ENCODE measurements at regions of chr4 and their contacts with region 1.

Region 1: GRCh38 chr4:83498187-83498586 is 13.3 kb upstream of the ABRAXAS1 start:
- DNase-seq: no peak
- H3K4me3 Mint-ChIP-seq: no peak overlapping the region
- H3K27ac Mint-ChIP-seq: no peak overlapping the region
- H3K4me1 Mint-ChIP-seq: no peaks in the 10 kb centered on the region
- H3K27me3 Mint-ChIP-seq: peaks cover 3% of the 10 kb centered on the region

Region 2: GRCh38 chr4:83484500-83485461 is 13.4 kb before region 1 on chr4 and contains the start of gene ABRAXAS1:
- CTCF ChIA-PET with region 1: interaction called, 7 read pairs
- POLR2A ChIA-PET with region 1: interaction called, 14 read pairs
- DNase-seq: peak; percentile 95
- H3K4me3 Mint-ChIP-seq: peak within 1 kb of the TSS; percentile 95
- H3K27ac Mint-ChIP-seq: peak within 1 kb of the TSS; percentile 89
- H3K4me1 Mint-ChIP-seq: peaks cover 15% of the 10 kb centered on the region
- H3K27me3 Mint-ChIP-seq: no peaks in the 10 kb centered on the region
- total RNA-seq, gene ABRAXAS1: 11.2 to 13.7 TPM

Region 3: DNA sequence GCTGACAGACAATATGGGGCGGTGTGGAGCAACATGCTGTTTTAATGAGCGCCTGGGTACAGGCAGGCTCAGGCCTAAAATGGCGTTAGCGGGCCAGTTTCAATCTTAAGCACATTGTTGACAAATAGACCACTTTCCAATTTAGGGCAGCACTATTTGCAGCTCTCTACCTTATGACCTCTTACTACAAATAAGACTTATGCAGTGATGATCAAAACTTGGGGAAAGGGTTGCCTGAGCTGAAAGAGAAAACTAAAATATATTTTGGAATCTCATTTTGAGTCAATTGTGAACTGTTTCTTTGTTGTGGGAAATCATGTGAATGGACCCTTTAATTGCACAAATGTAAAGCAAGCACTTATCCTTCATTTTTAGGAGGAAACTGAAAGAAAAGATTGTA is 12.3 kb after region 1 on chr4:
- CTCF ChIA-PET with region 1: interaction called, 16 read pairs
- POLR2A ChIA-PET with region 1: interaction called, 3 read pairs
- DNase-seq: no peak
- H3K4me3 Mint-ChIP-seq: no peak overlapping the region
- H3K27ac Mint-ChIP-seq: no peak overlapping the region
- H3K4me1 Mint-ChIP-seq: peaks cover 11% of the 10 kb centered on the region
- H3K27me3 Mint-ChIP-seq: no peaks in the 10 kb centered on the region

Measured in activated CD4-positive, alpha-beta memory T cell treated with anti-CD3 and anti-CD28 coated beads, Interleukin-2, amount 10 ng/mL, durations not matched to agents 7 days and 5 days (primary cell).